ENCODE measurements at regions of chr1 and their contacts with region 1.

Region 1: DNA sequence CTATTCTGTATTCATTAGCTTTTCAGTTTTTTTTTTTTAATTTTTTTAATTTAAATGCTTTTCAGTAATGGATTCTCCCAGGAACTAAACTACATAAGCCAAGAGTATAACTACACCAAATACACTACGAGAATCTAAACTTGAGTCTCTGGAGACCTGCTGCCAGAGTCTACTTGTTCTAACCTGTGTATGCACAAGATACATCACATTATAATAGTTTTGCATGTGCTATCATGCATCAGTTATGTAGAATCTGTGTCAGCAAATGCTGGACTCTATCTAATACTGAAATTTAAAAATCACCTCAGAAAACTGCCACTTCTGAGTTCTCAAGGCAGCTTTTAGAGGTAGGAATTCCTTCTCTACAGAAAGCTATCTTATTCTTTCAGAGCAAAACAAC is 146.3 kb upstream of the GREM2 start:
- DNase-seq: no peak
- H3K4me3 ChIP-seq: no peak overlapping the region
- H3K27ac ChIP-seq: no peak overlapping the region
- H3K4me1 ChIP-seq: no peaks in the 10 kb centered on the region
- H3K27me3 ChIP-seq: no peaks in the 10 kb centered on the region
- CTCF ChIP-seq: no peak

Region 2: GRCh38 chr1:239538239-239538988 is 1219.9 kb before region 1 on chr1:
- intact Hi-C with region 1: loop called (anchors 10 kb)
- DNase-seq: no peak
- H3K4me3 ChIP-seq: no peak overlapping the region
- H3K27ac ChIP-seq: no peak overlapping the region
- H3K4me1 ChIP-seq: no peaks in the 10 kb centered on the region
- H3K27me3 ChIP-seq: no peaks in the 10 kb centered on the region
- CTCF ChIP-seq: no peak

Measured in tibial artery (tissue), 4 donors.